ENCODE measurements at regions of chr11 and their contacts with region 1.

Region 1: DNA sequence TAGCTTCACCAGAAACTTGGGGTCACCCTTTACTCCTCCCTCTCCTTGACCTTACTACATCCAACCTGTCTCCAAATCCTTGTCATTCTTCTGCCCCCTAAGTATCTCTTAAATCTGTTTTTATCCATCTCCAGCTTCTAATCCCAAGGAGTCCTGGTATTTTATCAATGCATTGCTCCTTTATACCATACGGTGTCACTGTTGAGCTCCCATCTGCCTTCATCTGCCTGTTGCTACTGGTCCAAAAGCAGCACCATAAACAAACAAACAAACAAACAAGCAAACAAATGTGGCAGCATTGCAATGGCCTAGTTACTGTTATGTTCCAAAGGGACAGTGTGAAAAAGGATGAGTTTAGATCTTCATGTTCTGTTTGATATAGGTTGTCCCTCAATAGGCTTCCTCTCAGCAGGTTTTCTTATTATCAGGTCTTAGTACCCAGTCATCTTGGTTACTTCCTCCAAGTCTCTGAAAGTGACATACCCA is 34.2 kb downstream of the DNHD1 start:
- DNase-seq: peak in 1 of 2 donors; percentile 38
- ATAC-seq: peak in 5 of 8 donors; percentile 47 to 75 (median 67)
- H3K4me3 ChIP-seq: no peak overlapping the region
- H3K27ac ChIP-seq: no peak overlapping the region
- H3K4me1 ChIP-seq: no peaks in the 10 kb centered on the region
- H3K27me3 ChIP-seq: no peaks in the 10 kb centered on the region
- CTCF ChIP-seq: peak; percentile 55 to 88 (median 79)

Region 2: GRCh38 chr11:6705905-6706535 is 174.7 kb after region 1 on chr11:
- intact Hi-C with region 1: loop called in 8 of 10 experiments (anchors 1 to 10 kb)
- DNase-seq: peak in 1 of 2 donors; percentile 56
- ATAC-seq: peak in 7 of 8 donors; percentile 30 to 73 (median 56)
- H3K4me3 ChIP-seq: no peak overlapping the region
- H3K27ac ChIP-seq: peak overlapping the region in 8 of 10 donors; percentile 3 to 66 (median 36)
- H3K4me1 ChIP-seq: peaks cover 0 to 36% (median 23%) of the 10 kb centered on the region in 9 donors
- H3K27me3 ChIP-seq: no peaks in the 10 kb centered on the region
- CTCF ChIP-seq: peak; percentile 87 to 98 (median 94)